ENCODE measurements at regions of chr18 and their contacts with region 1.

Region 1: DNA sequence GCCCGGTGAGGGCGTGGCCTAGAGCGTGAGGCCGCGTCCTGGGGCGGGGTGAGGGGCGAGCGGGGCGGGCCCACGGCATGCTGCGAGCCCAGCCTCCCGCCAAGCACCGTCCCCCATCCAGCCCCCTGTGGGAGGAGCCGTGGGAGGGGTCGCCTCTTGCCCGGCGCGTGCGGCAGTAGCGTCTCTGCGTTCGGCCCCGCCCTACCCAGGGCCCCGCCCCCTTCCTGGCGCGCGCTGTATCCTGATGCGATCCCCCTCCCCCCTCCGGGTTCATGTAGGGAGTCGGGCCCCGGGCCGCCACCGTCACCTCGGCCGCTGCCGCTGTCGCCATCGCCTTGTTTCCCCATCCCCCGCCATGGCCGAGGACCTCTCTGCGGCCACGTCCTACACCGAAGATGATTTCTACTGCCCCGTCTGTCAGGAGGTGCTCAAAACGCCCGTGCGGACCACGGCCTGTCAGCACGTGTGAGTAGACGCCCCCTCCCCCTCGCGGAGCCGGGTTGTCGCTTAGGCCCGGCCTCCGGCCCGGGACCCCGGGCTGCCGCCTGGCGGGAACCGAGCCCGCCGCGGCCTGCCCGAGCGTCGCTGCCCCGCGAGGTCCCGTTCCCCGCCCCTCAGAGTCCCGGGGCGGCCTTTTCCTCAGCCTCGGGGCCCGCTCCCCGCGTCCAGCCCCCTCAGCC is 888 bp downstream of the RNF138 start:
- DNase-seq: peak; percentile 99 to 100 (median 100)
- ATAC-seq: peak; percentile 98 to 99 (median 98)
- H3K4me3 ChIP-seq: peak overlapping the region; percentile 69 to 96 (median 84)
- H3K27ac ChIP-seq: peak overlapping the region; percentile 95 to 100 (median 99)
- H3K4me1 ChIP-seq: peaks cover 0 to 47% (median 28%) of the 10 kb centered on the region in 12 donors
- H3K27me3 ChIP-seq: no peaks in the 10 kb centered on the region
- CTCF ChIP-seq: no peak
- POLR2A ChIP-seq: peak in 1 of 2 donors; percentile 35

Region 2: DNA sequence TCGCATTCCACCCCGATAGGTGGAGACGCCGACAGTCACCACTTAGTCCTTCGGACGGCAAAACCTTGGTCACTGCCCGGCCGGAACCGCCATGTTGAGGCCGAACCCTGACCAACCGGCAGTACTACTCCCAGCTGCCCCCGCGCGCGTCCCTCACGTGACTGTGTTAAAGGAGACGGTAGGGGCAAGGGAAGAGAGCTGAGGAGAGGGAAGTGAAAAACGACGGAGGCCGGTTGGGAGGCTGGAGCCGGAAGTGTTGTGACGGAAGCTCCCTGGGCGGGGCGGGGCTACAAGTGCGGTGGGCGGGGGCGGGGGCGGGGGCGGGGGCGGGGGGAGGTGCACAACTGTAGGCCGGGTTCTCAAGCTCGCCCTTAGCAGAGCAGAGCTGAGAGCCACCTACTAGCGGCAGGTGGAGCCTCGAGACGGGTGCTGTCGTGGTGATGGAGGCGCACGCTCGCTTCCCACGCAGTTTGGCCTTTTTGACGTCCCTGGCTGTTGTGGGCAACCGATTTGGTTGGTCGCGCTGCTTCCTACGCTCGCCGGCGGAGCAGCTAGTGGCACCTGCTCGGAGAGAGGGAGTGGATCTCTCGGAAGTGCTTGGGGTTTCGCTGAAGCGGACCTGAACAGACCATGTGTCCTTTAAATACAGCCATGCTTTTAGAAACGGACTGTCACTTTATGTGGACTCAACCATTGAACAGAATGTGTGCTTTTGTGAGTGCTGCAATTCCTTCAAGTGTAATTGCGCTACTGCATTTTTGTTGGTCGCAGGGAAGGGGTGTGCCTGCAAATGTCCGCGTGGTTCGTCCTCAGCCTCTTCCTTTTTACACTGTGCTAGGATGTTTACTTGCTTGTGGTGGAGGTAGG is 149.3 kb before region 1 on chr18 and contains the start of gene TRAPPC8:
- intact Hi-C with region 1: loop called in 7 of 10 experiments (anchors 2 to 10 kb)
- DNase-seq: peak; percentile 98 to 99 (median 98)
- ATAC-seq: peak; percentile 99
- H3K4me3 ChIP-seq: peak within 1 kb of the TSS; percentile 70 to 97 (median 86)
- H3K27ac ChIP-seq: peak within 1 kb of the TSS; percentile 80 to 95 (median 92)
- H3K4me1 ChIP-seq: peaks cover 3 to 45% (median 30%) of the 10 kb centered on the region in 12 donors
- H3K27me3 ChIP-seq: no peaks in the 10 kb centered on the region
- CTCF ChIP-seq: peak in 3 of 12 donors; percentile 28 to 39 (median 37)
- POLR2A ChIP-seq: no peak
- total RNA-seq, gene TRAPPC8: 25.5 to 41.9 (median 31.0) TPM

Region 3: DNA sequence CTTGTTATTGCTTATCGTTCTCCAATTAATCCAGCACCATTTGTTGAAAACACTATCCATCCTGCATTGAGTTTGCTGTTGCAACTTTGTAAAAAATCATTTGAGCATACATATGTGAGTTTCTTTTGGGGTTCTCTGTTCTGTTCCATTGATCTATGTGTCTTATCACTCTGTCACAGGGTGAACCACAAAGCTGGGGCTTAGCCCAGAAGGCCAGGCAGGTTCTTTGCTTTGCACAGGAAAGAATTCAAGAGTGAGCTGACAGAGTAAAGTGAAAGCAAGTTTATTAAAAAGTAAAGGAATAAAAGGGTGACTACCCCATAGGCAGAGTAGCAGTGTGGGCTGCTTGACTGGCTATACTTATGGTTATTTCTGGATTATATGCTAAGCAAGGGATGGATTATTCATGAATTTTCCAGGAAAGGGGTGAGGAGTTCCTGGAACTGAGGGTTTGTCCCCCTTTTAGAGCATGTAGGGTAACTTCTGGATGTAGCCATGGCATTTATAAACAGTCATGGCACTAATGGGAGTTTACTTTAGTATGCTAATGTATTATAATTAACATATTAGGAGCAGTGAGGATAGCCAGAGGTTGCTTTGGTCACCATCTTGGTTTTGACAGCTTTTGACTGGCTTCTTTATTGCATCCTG is 45.9 kb after region 1 on chr18:
- intact Hi-C with region 1: no loop called
- DNase-seq: no peak
- ATAC-seq: no peak
- H3K4me3 ChIP-seq: no peak overlapping the region
- H3K27ac ChIP-seq: no peak overlapping the region
- H3K4me1 ChIP-seq: no peaks in the 10 kb centered on the region
- H3K27me3 ChIP-seq: no peaks in the 10 kb centered on the region
- CTCF ChIP-seq: no peak
- POLR2A ChIP-seq: no peak

Region 4: DNA sequence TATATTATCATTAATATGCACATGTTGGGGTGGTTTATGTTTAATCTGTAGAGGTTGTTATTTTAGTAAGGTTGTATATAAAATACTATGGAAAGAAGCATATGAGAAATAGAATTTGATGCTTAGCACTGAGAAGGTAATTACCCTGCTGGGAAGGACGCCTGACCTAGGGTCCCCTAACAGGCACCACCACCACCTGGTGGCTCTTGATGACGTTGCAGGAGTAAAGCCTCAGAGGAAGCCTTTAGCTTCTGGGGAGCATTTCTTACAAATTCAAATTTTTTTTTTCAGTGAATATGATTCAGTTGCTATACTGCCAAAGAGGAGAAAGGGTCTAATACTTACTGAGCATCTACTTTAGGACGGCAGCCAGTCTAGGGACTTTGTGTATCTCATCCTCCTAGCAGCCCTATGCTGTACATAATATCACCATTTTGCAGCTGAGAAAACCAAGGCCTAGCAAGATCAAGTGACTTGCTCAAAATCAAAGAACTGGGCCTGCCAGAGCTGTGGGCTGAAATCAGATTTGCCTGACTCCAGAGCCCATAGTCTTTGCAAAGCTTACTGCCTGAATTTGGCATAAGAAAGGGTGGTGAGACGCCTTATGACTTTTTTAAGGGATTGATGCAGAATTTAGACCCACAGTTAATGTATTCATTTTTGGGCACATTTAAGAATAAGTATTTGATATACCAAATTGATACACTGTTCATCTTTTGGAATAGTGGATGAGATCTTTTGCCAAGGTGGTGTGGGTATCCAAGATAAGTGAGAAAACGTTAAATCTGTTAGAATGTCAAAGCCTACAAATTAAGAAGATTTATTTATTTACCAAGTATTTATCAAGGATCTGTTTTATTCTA is 456.9 kb after region 1 on chr18:
- intact Hi-C with region 1: no loop called
- DNase-seq: peak in 3 of 5 donors; percentile 23 to 44 (median 30)
- ATAC-seq: peak in 3 of 4 donors; percentile 79 to 86 (median 79)
- H3K4me3 ChIP-seq: no peak overlapping the region
- H3K27ac ChIP-seq: no peak overlapping the region
- H3K4me1 ChIP-seq: no peaks in the 10 kb centered on the region
- H3K27me3 ChIP-seq: no peaks in the 10 kb centered on the region
- CTCF ChIP-seq: peak; percentile 47 to 78 (median 66)
- POLR2A ChIP-seq: no peak

Region 5: GRCh38 chr18:33169218-33169617 is 1076.7 kb after region 1 on chr18:
- intact Hi-C with region 1: no loop called
- DNase-seq: no peak
- ATAC-seq: no peak
- H3K4me3 ChIP-seq: no peak overlapping the region
- H3K27ac ChIP-seq: no peak overlapping the region
- H3K4me1 ChIP-seq: no peaks in the 10 kb centered on the region
- H3K27me3 ChIP-seq: no peaks in the 10 kb centered on the region
- CTCF ChIP-seq: no peak
- POLR2A ChIP-seq: no peak